ENCODE measurements at regions of chr19 and their contacts with region 1.

Region 1: DNA sequence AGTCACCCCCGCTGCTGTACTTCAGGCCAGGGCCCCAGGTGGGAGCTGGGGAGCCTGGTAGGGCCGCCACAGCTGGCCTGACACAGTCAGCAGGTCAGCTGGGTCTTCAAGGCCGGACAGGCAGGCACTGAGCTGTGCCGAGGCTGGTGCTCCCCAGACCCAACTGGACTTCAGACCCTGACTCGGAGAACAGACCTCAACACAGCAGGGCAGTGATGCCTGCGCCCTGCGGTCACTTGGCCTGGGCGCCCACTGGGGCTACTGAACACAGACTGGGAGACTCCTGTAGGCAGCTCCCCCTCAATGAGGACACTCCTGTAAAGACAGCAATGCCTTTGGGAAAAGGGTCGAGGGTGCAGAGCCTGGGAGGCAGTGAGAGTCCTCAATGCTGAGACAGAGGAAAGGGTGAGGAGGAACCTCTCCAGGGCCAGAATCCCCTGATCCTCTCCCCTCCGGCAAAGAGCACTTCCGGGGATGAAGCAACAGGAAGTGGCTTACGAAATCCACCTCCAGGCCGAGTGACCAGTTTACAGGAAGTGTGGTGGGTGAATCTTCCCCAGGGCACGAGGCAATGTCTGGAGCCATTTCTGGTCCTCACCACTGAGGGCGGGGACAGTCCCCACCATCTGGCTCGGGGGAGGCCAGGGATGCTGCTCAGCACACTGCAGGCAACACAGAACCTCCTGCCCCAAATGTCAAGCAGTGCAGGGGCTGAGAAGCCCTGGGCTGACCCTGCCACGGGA is 40.8 kb upstream of the ISYNA1 start:
- DNase-seq: peak in 32 of 42 donors; percentile 24 to 73 (median 49)

Region 2: GRCh38 chr19:18436671-18437490 is 41.9 kb before region 1 on chr19:
- intact Hi-C with region 1: no loop called
- DNase-seq: peak in 18 of 42 donors; percentile 26 to 72 (median 59)

Region 3: DNA sequence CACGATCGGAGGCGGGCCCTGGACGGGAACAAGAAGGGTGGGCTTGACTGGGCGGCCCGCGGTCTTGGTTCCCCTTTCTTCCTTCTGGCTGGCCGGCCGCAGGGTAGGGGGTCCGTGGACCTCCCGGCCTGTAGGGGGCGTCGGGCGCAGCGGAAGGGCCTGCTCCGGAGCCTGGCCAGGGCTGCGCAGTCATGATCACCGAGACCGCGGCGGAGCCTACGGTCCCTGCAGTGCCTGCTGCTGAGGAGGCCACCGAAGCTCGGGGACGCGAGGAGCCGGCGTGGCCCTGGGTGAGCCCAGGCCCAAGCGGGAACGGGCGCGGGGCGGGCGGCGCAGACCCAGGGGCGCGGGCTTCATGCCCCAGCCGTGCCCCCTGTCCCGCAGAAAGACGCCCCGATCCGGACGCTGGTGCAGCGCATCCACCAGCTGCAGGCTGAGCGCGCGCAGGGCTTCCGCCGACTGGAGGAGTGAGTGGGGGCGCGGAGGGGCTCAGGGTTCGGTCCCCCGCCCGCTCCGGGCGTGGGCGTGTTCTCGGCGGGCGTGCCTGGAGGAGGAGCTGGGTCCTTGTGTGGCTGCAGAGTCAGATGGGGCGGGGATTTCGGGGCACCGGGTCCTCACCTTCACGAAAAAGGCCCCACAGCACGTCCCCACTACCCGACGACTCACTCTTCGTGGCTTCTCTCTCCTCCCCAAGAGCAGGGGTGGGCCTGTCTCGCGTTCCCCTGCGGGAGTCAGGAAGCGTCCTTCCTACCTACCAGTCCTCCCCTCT is 110.1 kb after region 1 on chr19 and contains the start of gene REX1BD:
- intact Hi-C with region 1: loop called (anchors 10 kb)
- DNase-seq: peak; percentile 46 to 92 (median 85)

Measured in head of caudate nucleus (tissue), 42 donors.